Activated naive CD4-positive, alpha-beta T cell treated with anti-CD3 and anti-CD28 coated beads for 36 hours (primary cell): ENCODE measurements at regions of chr17 and their contacts with region 1.

Region 1: DNA sequence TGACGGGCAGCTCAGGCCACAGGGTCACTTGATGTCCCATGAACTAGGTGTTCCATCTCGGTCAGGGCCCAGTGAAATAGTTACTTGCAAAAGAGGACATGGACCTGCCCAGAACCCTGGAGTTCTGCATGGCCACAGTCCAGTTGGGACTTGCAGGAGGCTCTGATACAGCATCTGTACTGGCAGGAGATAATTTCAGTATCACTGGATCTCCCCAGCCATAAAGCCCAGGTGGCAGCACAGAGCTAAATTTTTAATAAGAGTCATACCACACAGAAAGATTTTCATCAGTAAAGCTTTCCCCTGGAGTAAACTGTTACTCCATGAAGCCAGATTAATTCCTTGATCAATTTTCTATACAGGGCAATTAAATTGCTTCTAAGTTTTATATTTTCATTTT is 18.0 kb upstream of the SLC16A5 start:
- DNase-seq: peak; percentile 42
- H3K4me3 Mint-ChIP-seq: no peak overlapping the region
- H3K27ac Mint-ChIP-seq: no peak overlapping the region
- H3K4me1 Mint-ChIP-seq: peaks cover 32% of the 10 kb centered on the region
- H3K27me3 Mint-ChIP-seq: no peaks in the 10 kb centered on the region

Region 2: DNA sequence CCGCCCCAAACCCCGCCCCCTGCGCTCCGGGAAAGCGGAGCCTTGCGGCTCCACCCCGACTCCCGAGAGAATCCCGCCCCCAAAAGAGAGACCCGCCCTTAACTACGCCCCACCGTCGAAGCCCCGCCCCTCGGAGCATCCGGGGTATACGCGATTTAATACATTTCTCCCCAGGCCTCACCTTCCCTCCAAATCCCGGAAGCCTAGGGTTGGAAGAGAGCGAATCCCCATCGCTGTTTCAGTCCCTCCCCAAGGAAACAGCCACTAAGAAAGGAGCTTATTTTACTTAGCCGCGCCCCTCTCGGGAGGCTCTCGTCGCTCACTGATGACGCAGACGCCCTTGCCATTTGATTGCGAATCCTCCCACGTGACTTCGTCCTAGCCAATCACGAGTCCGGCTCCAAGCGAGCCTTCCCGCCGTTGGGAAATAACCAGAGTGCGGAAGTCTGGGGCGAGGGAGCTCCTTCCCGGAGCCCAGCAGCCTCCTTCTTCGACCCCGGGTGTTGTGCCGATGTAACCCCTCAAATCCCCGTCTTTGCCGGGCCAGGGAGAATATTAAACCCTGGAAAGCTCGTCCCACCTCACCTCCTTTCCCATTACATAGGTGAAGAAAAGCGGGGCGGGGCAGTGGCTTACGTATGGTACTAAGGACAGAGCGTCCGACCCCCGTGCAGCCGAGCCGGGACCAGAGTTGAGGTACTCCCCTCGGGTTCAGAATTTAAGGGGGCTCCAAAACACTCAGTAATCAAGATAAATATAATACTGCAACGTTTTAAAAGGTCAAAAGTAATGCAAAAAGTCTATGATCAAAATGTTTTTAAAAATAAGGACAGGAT is 196.5 kb before region 1 on chr17:
- CTCF ChIA-PET with region 1: no interaction called
- intact Hi-C with region 1: no loop called
- DNase-seq: peak; percentile 100
- H3K4me3 Mint-ChIP-seq: peak overlapping the region; percentile 88
- H3K27ac Mint-ChIP-seq: peak overlapping the region; percentile 91
- H3K4me1 Mint-ChIP-seq: peaks cover 27% of the 10 kb centered on the region
- H3K27me3 Mint-ChIP-seq: no peaks in the 10 kb centered on the region

Region 3: DNA sequence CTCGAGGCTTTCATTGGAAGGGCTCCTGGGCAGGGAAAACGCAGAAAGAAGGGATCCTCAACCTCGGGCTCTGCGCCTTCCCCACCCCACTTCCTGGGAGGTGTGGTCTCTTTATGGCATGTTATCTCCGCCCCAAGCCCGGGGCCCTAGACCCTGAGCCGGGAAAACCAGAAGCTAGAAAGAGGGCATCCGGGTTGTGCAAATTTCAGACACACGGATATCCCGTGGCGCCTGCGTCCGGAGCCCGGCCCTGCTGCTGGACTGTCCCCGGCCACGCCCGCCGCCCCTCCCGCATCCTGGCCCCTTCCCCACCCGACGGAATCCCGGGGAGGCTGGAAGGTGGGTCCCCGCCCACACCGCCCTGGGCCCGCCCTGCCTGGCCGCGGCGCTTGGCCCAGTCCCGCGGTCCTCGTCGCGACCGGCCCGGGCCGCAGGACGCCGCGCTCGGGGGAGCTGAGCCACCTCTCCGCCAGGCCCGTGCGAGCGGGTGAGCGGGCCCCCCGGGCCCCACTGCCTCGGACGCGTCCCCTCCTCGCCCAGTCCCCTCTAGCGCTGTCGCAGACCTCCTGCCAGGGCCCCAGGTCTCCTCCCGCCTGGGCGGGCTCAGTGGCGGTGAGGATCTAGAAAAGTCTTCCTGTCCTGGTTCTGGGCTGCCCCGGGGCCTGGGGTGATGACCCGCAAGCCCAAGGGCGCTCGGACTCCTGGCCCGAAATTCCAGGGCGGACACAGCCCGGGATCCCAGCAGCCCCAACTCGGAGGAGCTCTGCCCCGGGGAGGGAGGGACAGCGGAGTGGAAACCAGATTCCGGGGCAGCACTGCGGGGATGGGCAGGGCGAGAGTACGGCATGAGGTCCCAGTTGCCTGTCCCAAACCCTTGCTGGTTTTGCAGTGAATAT is 18.0 kb after region 1 on chr17 and contains the start of gene SLC16A5:
- CTCF ChIA-PET with region 1: interaction called, 10 read pairs
- intact Hi-C with region 1: no loop called
- DNase-seq: peak; percentile 58
- H3K4me3 Mint-ChIP-seq: peak within 1 kb of the TSS; percentile 70
- H3K27ac Mint-ChIP-seq: peak within 1 kb of the TSS; percentile 56
- H3K4me1 Mint-ChIP-seq: peaks cover 44% of the 10 kb centered on the region
- H3K27me3 Mint-ChIP-seq: no peaks in the 10 kb centered on the region
- total RNA-seq, gene SLC16A5: 2.5 to 3.1 TPM